ENCODE measurements at regions of chr6 and their contacts with region 1.

Region 1: GRCh38 chr6:158290659-158291058 is 21.6 kb upstream of the TULP4 start:
- DNase-seq: peak; percentile 82
- H3K4me3 Mint-ChIP-seq: peak overlapping the region; percentile 7
- H3K27ac Mint-ChIP-seq: peak overlapping the region; percentile 53
- H3K4me1 Mint-ChIP-seq: peaks cover 26% of the 10 kb centered on the region
- H3K27me3 Mint-ChIP-seq: no peaks in the 10 kb centered on the region

Region 2: GRCh38 chr6:158270389-158271127 is 20.1 kb before region 1 on chr6:
- CTCF ChIA-PET with region 1: interaction called, 4 read pairs
- intact Hi-C with region 1: loop called (anchors 1 kb)
- DNase-seq: peak; percentile 50
- H3K4me3 Mint-ChIP-seq: peak overlapping the region; percentile 32
- H3K27ac Mint-ChIP-seq: no peak overlapping the region
- H3K4me1 Mint-ChIP-seq: peaks cover 30% of the 10 kb centered on the region
- H3K27me3 Mint-ChIP-seq: no peaks in the 10 kb centered on the region

Region 3: DNA sequence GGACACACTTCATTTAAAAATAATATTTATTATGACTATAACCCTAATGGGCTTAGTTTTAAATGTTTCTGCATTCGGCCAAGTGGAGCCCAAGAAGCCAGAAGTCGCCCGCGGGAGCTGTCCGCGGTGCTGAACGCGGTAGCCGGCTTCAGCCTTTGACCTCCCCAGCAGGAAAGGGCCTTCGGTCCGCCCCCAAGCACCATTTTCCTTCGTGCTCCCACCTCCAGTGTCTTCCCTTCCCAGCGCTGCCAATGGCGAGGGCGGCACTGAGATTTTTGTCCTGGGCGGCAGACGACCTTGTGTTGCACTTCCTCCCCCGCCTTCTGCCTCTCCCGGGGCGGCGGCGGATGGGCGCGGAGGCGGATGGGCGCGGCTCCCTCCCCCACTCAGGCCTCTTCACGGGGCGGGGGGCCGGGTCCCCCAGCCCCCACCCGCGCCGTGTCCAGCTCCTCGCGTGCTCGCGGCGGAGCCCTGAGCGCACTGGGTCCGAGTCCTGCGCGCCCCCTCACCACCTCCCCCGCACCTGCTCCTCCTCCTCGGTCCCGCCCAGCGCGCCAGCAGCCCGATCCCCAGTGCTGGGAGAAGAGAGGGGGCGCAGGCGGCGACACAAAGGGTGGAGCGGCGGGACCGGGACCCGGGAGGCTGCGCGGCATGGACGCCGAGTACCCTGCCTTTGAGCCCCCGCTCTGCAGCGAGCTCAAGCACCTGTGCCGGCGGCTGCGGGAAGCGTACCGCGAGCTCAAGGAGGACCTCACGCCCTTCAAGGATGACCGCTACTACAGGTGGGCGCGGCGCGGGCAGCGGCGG is 245.6 kb after region 1 on chr6:
- CTCF ChIA-PET with region 1: no interaction called
- intact Hi-C with region 1: loop called (anchors 1 kb)
- DNase-seq: peak; percentile 77
- H3K4me3 Mint-ChIP-seq: peak overlapping the region; percentile 56
- H3K27ac Mint-ChIP-seq: no peak overlapping the region
- H3K4me1 Mint-ChIP-seq: no peaks in the 10 kb centered on the region
- H3K27me3 Mint-ChIP-seq: peaks cover 38% of the 10 kb centered on the region